ENCODE measurements at regions of chr20 and their contacts with region 1.

Region 1: GRCh38 chr20:20824924-20825584 is 112.6 kb upstream of the RALGAPA2 start:
- DNase-seq: peak; percentile 78
- H3K4me3 Mint-ChIP-seq: no peak overlapping the region
- H3K27ac Mint-ChIP-seq: no peak overlapping the region
- H3K4me1 Mint-ChIP-seq: peaks cover 2% of the 10 kb centered on the region
- H3K27me3 Mint-ChIP-seq: peaks cover 23% of the 10 kb centered on the region

Region 2: GRCh38 chr20:20083807-20084206 is 741.2 kb before region 1 on chr20:
- CTCF ChIA-PET with region 1: no interaction called
- intact Hi-C with region 1: loop called (anchors 2 kb)
- DNase-seq: no peak
- H3K4me3 Mint-ChIP-seq: no peak overlapping the region
- H3K27ac Mint-ChIP-seq: no peak overlapping the region
- H3K4me1 Mint-ChIP-seq: peaks cover 2% of the 10 kb centered on the region
- H3K27me3 Mint-ChIP-seq: peaks cover 14% of the 10 kb centered on the region

Region 3: GRCh38 chr20:20360464-20360863 is 464.6 kb before region 1 on chr20:
- CTCF ChIA-PET with region 1: no interaction called
- intact Hi-C with region 1: loop called (anchors 1 kb)
- DNase-seq: peak; percentile 54
- H3K4me3 Mint-ChIP-seq: no peak overlapping the region
- H3K27ac Mint-ChIP-seq: no peak overlapping the region
- H3K4me1 Mint-ChIP-seq: peaks cover 21% of the 10 kb centered on the region
- H3K27me3 Mint-ChIP-seq: peaks cover 53% of the 10 kb centered on the region

Region 4: GRCh38 chr20:20593447-20594170 is 231.4 kb before region 1 on chr20:
- CTCF ChIA-PET with region 1: interaction called, 4 read pairs
- intact Hi-C with region 1: loop called (anchors 1 kb)
- DNase-seq: peak; percentile 30
- H3K4me3 Mint-ChIP-seq: no peak overlapping the region
- H3K27ac Mint-ChIP-seq: no peak overlapping the region
- H3K4me1 Mint-ChIP-seq: no peaks in the 10 kb centered on the region
- H3K27me3 Mint-ChIP-seq: no peaks in the 10 kb centered on the region

Region 5: GRCh38 chr20:20630556-20630955 is 194.5 kb before region 1 on chr20:
- CTCF ChIA-PET with region 1: no interaction called
- intact Hi-C with region 1: no loop called
- DNase-seq: no peak
- H3K4me3 Mint-ChIP-seq: no peak overlapping the region
- H3K27ac Mint-ChIP-seq: no peak overlapping the region
- H3K4me1 Mint-ChIP-seq: no peaks in the 10 kb centered on the region
- H3K27me3 Mint-ChIP-seq: no peaks in the 10 kb centered on the region

Region 6: GRCh38 chr20:20658871-20659431 is 166.1 kb before region 1 on chr20:
- CTCF ChIA-PET with region 1: interaction called, 15 read pairs
- intact Hi-C with region 1: no loop called
- DNase-seq: no peak
- H3K4me3 Mint-ChIP-seq: no peak overlapping the region
- H3K27ac Mint-ChIP-seq: no peak overlapping the region
- H3K4me1 Mint-ChIP-seq: no peaks in the 10 kb centered on the region
- H3K27me3 Mint-ChIP-seq: no peaks in the 10 kb centered on the region

Region 7: GRCh38 chr20:20664795-20665589 is 160.1 kb before region 1 on chr20:
- CTCF ChIA-PET with region 1: interaction called, 18 read pairs
- intact Hi-C with region 1: loop called (anchors 1 kb)
- DNase-seq: peak; percentile 22
- H3K4me3 Mint-ChIP-seq: no peak overlapping the region
- H3K27ac Mint-ChIP-seq: no peak overlapping the region
- H3K4me1 Mint-ChIP-seq: peaks cover 24% of the 10 kb centered on the region
- H3K27me3 Mint-ChIP-seq: no peaks in the 10 kb centered on the region

Region 8: GRCh38 chr20:20802328-20802727 is 22.7 kb before region 1 on chr20:
- CTCF ChIA-PET with region 1: no interaction called
- intact Hi-C with region 1: no loop called
- DNase-seq: no peak
- H3K4me3 Mint-ChIP-seq: no peak overlapping the region
- H3K27ac Mint-ChIP-seq: no peak overlapping the region
- H3K4me1 Mint-ChIP-seq: no peaks in the 10 kb centered on the region
- H3K27me3 Mint-ChIP-seq: peaks cover 4% of the 10 kb centered on the region

Region 9: GRCh38 chr20:20837574-20838021 is 12.5 kb after region 1 on chr20:
- CTCF ChIA-PET with region 1: interaction called, 11 read pairs
- intact Hi-C with region 1: no loop called
- DNase-seq: peak; percentile 67
- H3K4me3 Mint-ChIP-seq: no peak overlapping the region
- H3K27ac Mint-ChIP-seq: no peak overlapping the region
- H3K4me1 Mint-ChIP-seq: peaks cover 3% of the 10 kb centered on the region
- H3K27me3 Mint-ChIP-seq: peaks cover 7% of the 10 kb centered on the region

Region 10: GRCh38 chr20:20926209-20926905 is 101.3 kb after region 1 on chr20:
- CTCF ChIA-PET with region 1: no interaction called
- intact Hi-C with region 1: no loop called
- DNase-seq: no peak
- H3K4me3 Mint-ChIP-seq: no peak overlapping the region
- H3K27ac Mint-ChIP-seq: no peak overlapping the region
- H3K4me1 Mint-ChIP-seq: no peaks in the 10 kb centered on the region
- H3K27me3 Mint-ChIP-seq: peaks cover 12% of the 10 kb centered on the region

Region 11: GRCh38 chr20:20993372-20993771 is 168.3 kb after region 1 on chr20:
- CTCF ChIA-PET with region 1: no interaction called
- intact Hi-C with region 1: no loop called
- DNase-seq: no peak
- H3K4me3 Mint-ChIP-seq: no peak overlapping the region
- H3K27ac Mint-ChIP-seq: no peak overlapping the region
- H3K4me1 Mint-ChIP-seq: no peaks in the 10 kb centered on the region
- H3K27me3 Mint-ChIP-seq: peaks cover 13% of the 10 kb centered on the region